ENCODE measurements at regions of chr5 and their contacts with region 1.

Region 1: GRCh38 chr5:78077369-78078068 is 217.0 kb downstream of the AP3B1 start:
- DNase-seq: no peak
- H3K4me3 ChIP-seq: no peak overlapping the region
- H3K27ac ChIP-seq: no peak overlapping the region
- H3K4me1 ChIP-seq: no peaks in the 10 kb centered on the region
- H3K27me3 ChIP-seq: no peaks in the 10 kb centered on the region
- CTCF ChIP-seq: no peak
- POLR2A ChIP-seq: no peak

Region 2: GRCh38 chr5:78095125-78095524 is 17.6 kb after region 1 on chr5:
- intact Hi-C with region 1: loop called (anchors 1 kb)
- DNase-seq: no peak
- H3K4me3 ChIP-seq: no peak overlapping the region
- H3K27ac ChIP-seq: no peak overlapping the region
- H3K4me1 ChIP-seq: no peaks in the 10 kb centered on the region
- H3K27me3 ChIP-seq: no peaks in the 10 kb centered on the region
- CTCF ChIP-seq: no peak
- POLR2A ChIP-seq: no peak

Measured in breast epithelium (tissue), 4 donors.